HAP-1 (cell line): ENCODE measurements at regions of chr11 and their contacts with region 1.

Region 1: GRCh38 chr11:45102810-45103621 is 43.4 kb upstream of the PRDM11 start:
- DNase-seq: peak; percentile 45 to 65
- H3K4me3 ChIP-seq: no peak overlapping the region
- H3K4me1 ChIP-seq: no peaks in the 10 kb centered on the region
- H3K27me3 ChIP-seq: peaks cover 10% of the 10 kb centered on the region

Region 2: DNA sequence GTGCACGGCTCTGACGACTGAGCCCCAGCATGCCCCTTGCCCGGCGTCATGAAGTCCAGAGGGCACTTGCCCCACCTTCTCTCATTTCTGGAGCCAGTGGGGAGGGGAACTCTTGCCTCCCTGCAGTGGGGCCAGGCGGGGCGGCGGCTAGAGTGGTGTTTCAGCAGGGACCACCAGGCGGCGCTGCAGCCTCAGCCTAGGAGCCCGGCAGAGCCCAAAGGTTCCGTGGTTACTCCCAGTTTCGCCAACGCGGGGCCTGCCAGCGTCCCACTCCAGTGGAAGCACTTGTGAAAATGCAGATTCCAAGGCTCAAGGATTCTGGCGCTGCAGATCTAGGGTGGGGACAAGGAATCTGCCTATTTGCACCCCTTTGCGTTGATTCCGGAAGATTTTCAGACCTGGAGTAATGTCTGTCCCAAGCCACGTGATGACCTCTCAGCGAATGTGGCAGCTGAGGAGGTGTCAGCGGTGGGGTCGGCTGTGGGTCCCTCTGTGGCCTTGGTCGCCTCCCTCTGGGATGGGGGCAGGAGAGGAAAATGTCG is 481.8 kb before region 1 on chr11:
- in situ Hi-C with region 1: loop called (anchors 10 kb)
- DNase-seq: peak; percentile 51 to 88
- H3K4me3 ChIP-seq: no peak overlapping the region
- H3K4me1 ChIP-seq: no peaks in the 10 kb centered on the region
- H3K27me3 ChIP-seq: no peaks in the 10 kb centered on the region

Region 3: DNA sequence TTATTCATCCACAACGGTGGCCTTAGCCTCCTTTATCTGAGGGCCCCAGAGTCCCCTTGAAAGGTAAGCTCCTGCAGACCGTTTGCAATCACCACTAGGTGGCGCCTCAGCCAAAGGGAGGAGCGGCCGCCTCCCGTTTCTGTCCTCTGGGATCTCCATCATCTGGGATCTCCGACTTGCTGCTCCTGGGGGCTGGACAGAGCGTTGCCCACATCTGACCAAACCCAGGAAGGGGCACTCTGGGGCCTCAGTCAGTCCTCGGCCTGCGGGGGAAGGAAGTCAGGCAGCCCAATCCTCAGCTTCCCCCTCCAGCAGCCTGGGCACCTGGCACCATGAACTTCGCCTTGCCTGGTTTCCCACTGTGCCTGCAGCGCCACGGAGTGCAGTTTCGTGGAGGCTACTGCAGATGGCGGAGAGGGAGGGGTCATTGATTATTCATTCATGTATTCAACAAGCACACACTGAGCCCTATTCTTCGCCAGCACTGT is 175.8 kb before region 1 on chr11:
- in situ Hi-C with region 1: loop called (anchors 5 kb)
- DNase-seq: peak; percentile 57 to 85
- H3K4me3 ChIP-seq: no peak overlapping the region
- H3K4me1 ChIP-seq: no peaks in the 10 kb centered on the region
- H3K27me3 ChIP-seq: no peaks in the 10 kb centered on the region

Region 4: DNA sequence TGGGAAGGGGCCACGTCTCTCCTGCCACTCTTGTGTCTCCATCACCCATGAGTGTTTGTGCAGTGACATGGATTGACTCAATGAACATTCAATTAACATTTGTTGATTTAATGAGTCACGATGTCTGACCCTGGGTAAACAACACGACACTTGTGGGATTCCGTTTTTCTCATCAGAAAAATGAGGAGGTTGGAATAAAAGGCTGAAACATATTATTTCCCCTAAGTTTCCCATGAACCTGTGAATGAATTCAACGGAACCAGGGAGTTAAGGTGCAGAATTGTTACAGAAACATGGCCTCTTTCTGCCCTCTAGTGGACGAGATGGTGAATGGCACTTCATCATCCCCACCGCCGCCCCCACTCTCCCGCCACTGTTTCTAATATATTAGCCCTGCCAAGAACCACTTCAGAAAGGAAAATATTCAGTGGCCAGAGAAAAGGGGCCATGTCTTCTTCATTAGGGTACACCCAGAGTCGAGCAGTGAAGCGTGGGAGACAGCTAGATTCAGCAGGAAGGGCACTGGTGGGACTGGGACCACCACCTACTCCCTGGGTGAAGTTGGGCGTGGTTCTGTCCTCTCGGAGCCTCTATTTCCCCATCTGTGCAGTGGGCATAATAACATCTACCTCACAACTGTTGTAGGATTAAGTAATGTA is 229.4 kb after region 1 on chr11:
- in situ Hi-C with region 1: loop called (anchors 5 kb)
- DNase-seq: peak; percentile 48 to 59
- H3K4me3 ChIP-seq: no peak overlapping the region
- H3K4me1 ChIP-seq: no peaks in the 10 kb centered on the region
- H3K27me3 ChIP-seq: no peaks in the 10 kb centered on the region